ENCODE measurements at regions of chr3 and their contacts with region 1.

Region 1: DNA sequence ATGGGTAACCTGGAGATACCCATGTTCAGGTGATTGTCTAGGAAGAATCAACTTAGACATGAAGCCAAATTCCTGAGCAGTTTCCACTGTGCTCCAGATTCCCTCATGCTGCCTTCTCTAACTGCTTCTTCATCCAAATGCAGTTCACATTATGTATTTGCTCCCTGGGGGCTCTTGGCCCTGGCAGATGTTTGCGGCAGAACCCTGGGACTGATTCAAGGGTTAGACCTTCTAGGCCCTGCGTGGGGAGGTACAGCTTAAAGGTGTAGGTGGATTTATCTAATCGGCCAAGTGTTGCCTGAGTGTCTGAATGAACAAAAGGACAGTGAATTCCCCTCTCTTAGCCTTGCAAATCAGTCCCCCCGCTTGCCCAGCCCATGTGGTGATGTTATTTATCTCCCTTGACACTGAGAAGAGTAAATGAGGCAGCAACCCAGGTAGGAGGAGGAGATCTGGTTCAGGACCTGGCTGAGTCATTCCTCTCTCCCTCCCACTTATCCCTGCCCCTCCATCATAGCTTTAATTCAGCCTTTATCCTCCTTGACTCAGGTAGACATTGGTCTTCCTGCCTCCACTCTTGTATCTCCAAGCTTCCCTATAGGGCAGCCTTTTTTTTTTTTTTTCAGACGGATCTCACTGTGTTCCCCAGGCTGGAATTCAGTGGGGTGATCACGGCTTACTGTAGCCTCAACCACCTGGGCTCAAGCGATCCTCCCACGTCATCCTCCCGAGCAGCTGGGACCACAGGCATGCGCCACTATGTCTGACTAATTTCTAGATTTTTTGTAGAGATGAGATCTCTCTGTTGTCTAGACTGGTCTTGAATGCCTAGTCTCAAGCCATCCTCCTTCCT is 54.8 kb downstream of the MAGEF1 start:
- DNase-seq: no peak
- ATAC-seq: no peak
- H3K4me3 ChIP-seq: no peak overlapping the region
- H3K27ac ChIP-seq: no peak overlapping the region
- H3K4me1 ChIP-seq: no peaks in the 10 kb centered on the region
- H3K27me3 ChIP-seq: no peaks in the 10 kb centered on the region
- CTCF ChIP-seq: no peak

Region 2: GRCh38 chr3:184354121-184354728 is 302.8 kb before region 1 on chr3:
- intact Hi-C with region 1: no loop called
- DNase-seq: peak in 1 of 2 donors; percentile 58
- ATAC-seq: peak; percentile 43 to 71 (median 55)
- H3K4me3 ChIP-seq: no peak overlapping the region
- H3K27ac ChIP-seq: no peak overlapping the region
- H3K4me1 ChIP-seq: no peaks in the 10 kb centered on the region
- H3K27me3 ChIP-seq: no peaks in the 10 kb centered on the region
- CTCF ChIP-seq: peak; percentile 56

Region 3: DNA sequence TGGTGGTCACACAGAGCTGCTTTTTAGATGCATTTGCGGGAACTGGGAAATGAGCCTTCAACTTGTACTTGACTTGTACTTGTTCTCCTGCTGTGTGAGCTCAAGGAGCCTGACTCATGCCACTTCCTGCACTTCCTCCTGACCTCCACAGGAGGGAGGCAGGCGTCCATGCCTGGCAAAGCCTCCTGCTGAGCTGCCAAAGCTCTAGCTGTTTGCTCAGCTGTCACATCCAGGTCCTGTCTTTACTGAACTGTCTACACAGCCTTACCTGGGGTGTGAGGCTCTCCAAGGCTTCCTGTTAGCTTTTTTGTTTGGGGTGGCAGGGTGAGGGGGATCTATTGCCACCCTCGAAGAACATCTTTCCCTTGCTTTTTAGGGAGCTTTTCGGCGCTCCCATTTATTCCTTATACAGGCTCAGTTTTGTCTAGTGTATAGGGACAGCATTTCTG is 285.5 kb before region 1 on chr3:
- intact Hi-C with region 1: no loop called
- DNase-seq: peak; percentile 78 to 91
- ATAC-seq: peak; percentile 91 to 97 (median 94)
- H3K4me3 ChIP-seq: no peak overlapping the region
- H3K27ac ChIP-seq: no peak overlapping the region
- H3K4me1 ChIP-seq: peaks cover 17% of the 10 kb centered on the region
- H3K27me3 ChIP-seq: no peaks in the 10 kb centered on the region
- CTCF ChIP-seq: peak; percentile 98

Region 4: DNA sequence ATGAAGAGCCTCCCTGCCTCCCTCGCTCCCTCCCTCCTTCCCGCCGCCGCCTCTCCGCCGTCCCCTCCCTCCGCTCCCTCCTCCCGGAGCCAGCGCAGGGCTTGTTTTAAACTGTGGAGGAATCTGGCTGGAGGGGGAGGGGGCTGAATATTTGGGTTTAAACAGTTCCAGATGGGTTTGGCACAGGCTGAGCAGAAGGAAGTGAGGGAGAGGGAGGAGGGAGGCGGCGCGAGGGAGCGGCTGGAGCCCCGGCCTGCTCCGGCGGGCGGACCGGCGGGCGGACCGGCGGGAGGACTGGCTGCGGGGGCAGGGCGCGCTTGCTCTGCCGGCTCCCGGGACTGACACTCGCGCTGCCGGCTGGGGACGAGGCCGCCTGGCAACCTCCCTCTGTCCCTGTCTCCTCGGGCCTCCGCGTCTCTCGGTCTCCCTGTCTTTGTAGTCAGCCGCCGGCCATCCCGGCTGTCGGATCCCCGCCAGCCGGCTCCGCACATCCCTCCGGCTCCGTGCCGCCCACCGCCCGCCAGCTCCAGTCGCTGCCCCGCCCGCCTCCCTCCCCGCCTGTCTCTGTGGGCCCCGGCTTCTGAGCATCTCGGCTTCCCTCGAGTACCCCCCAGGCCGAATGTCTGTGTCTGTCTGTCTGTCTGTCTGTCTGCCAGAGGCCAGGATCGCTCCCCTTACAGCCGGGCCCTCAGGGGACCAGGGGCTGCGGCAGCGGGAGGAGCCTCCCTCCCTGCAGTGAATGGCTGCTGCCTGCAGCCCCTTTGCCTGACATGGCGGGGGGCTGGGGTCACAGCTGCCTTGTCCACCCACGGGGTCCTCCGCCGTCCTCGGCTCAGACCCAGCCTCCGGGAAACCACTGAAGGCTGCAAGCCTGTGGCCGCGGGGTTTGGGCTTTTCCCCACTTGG is 87.9 kb before region 1 on chr3:
- intact Hi-C with region 1: loop called in 1 of 2 experiments (anchors 5 kb)
- DNase-seq: peak; percentile 77 to 87
- ATAC-seq: peak; percentile 51 to 82 (median 70)
- H3K4me3 ChIP-seq: peak overlapping the region; percentile 66
- H3K27ac ChIP-seq: no peak overlapping the region
- H3K4me1 ChIP-seq: no peaks in the 10 kb centered on the region
- H3K27me3 ChIP-seq: peaks cover 0 to 16% (median 4%) of the 10 kb centered on the region in 3 donors
- CTCF ChIP-seq: no peak

Measured in psoas muscle (tissue), 8 donors.